Left colon (tissue), 2 donors: ENCODE measurements at regions of chr9 and their contacts with region 1.

Region 1: DNA sequence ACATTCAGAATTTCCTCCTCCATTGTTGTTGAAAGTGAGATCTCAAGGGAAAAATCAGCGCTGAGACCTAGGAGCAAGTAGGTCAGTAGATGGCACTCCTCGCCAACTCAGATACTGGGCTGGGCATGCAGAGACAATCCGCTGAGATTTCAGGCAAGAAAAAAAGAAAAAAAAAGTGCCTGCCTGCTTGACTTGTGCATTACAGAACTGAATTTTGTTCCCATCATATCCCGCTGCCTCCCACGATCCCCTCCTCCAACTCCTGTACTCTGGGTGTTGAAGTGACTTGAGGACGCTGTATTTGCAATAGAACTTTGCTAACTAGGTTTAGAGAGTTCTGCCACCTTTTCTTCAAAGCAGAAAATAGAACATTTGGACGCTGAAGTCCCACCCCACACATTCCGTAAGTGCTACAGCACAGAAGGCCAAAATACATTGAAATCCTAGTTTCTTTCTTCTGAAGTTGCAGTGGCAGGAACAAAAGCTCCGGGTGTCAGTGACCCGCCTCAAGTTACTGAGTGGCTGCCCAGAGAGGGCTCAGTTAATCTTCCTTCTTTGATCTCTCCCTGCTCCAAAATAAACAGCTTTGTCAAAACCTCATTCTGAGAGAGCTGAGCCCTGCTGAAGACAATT is 265.8 kb downstream of the MLLT3 start:
- DNase-seq: peak; percentile 66 to 74
- ATAC-seq: peak; percentile 92

Region 2: GRCh38 chr9:20095430-20096092 is 261.0 kb before region 1 on chr9:
- intact Hi-C with region 1: no loop called
- DNase-seq: no peak
- ATAC-seq: no peak

Region 3: GRCh38 chr9:20622330-20623020 is 266.0 kb after region 1 on chr9 and contains the start of gene MLLT3:
- intact Hi-C with region 1: loop called in 1 of 2 experiments (anchors 5 kb)
- DNase-seq: peak; percentile 97
- ATAC-seq: peak; percentile 85
- total RNA-seq, gene MLLT3: 44.1 to 62.7 TPM

Region 4: DNA sequence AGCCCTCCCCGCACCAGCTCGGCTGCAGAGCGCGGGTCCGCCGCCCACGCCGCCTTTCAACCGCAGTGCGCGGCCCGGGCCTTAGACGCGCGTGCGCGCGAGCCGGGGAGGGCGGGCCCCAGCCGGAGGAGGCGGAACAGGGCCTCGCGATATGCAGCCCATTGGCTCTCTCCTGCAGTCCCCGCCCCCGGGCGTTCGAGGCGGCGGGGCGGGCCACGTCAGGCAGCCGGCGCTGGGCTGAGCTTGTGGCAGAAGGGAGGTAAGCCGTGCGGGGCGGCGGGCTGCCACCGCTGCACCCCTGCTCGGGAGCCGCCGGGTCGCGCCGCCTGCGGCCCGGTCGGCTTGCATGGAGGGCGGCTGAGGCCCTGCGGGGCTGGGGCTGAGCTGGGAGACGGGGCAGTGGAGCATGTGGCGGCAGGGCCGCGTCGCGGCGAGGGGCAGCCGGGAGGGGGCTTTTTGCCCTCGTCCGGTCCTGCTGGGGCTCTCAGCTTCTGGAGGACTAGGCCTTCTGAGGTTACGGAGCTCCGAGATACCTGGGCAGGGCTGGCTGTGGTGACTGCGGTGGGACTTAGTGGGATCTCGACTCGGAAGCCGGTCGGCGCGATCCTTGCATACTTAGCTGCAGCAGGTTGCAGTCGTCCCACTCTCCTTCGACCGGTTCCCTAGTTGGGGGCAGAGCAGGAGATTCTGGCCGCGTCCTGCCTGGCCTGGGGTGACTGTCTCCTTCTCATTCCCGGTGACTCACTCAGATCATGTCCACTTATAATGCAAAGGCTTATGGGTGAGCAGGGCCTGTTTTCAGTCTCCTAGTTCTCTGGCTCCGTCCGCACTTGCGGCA is 327.7 kb after region 1 on chr9 and contains the start of gene FOCAD:
- intact Hi-C with region 1: loop called in 1 of 2 experiments (anchors 10 kb)
- DNase-seq: peak; percentile 96
- ATAC-seq: peak; percentile 97
- total RNA-seq, gene FOCAD: 21.5 to 29.2 TPM

Region 5: GRCh38 chr9:20941174-20941690 is 584.7 kb after region 1 on chr9:
- intact Hi-C with region 1: loop called in 1 of 2 experiments (anchors 10 kb)
- DNase-seq: peak; percentile 31 to 44
- ATAC-seq: peak; percentile 99